Ascending aorta (tissue), 2 donors: ENCODE measurements at regions of chr3 and their contacts with region 1.

Region 1: GRCh38 chr3:113745273-113746068 is 578 bp downstream of the NAA50 start:
- DNase-seq: peak; percentile 59 to 88
- H3K4me3 ChIP-seq: peak overlapping the region; percentile 97 to 100
- H3K27ac ChIP-seq: peak overlapping the region; percentile 98 to 100
- H3K4me1 ChIP-seq: peaks cover 6 to 29% of the 10 kb centered on the region in 2 donors
- H3K27me3 ChIP-seq: no peaks in the 10 kb centered on the region
- CTCF ChIP-seq: peak; percentile 44 to 80 (median 65)

Region 2: DNA sequence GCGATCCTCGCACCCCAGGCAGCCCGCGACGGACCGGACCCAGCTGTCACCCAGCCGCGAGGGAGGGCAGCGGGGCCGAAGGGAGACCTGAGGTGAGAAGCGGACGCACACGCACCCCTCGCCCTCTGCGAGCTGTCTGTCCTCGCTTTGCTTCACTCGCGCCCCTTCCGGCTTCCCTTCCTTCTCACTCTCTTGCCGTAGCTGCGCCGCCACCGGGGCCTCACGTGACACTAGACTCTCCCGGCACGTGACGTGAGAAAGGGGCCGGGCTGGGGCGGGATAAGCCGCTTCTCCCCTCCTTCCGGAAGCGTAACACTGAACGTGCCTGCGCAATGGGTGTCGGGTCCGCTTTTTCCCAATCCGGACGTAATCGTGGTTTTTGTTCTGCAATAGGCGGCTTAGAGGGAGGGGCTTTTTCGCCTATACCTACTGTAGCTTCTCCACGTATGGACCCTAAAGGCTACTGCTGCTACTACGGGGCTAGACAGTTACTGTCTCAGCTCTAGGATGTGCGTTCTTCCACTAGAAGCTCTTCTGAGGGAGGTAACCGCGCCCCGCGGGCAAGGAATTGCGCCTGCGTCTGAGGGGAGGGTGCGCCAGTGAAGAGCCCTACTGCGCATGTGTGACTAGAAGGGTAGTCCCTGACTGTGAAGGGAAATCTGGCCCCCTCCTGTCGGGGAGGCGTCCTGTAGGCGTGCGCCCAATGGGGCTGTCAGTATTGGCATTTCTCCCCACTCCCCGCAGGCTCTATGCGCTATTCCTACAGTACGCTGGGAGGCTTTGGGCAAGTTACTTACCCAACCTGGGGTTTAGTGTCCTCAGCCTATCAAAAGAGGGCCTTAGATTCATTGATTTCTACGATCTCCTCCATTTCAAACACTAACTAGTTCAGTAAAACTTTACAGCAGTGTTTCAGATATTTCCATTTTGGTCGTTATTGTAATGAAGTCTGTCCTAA is 1183.5 kb before region 1 on chr3 and contains the starts of genes ATG3 and SLC35A5:
- intact Hi-C with region 1: loop called (anchors 2 kb)
- DNase-seq: peak; percentile 95 to 100
- H3K4me3 ChIP-seq: peak within 1 kb of the TSS; percentile 70 to 73
- H3K27ac ChIP-seq: peak within 1 kb of the TSS; percentile 95 to 98
- H3K4me1 ChIP-seq: peaks cover 8 to 17% of the 10 kb centered on the region in 2 donors
- H3K27me3 ChIP-seq: no peaks in the 10 kb centered on the region
- CTCF ChIP-seq: peak in 1 of 3 experiments; percentile 5
- total RNA-seq, gene ATG3: 73.3 TPM
- total RNA-seq, gene SLC35A5: 20.8 TPM

Region 3: DNA sequence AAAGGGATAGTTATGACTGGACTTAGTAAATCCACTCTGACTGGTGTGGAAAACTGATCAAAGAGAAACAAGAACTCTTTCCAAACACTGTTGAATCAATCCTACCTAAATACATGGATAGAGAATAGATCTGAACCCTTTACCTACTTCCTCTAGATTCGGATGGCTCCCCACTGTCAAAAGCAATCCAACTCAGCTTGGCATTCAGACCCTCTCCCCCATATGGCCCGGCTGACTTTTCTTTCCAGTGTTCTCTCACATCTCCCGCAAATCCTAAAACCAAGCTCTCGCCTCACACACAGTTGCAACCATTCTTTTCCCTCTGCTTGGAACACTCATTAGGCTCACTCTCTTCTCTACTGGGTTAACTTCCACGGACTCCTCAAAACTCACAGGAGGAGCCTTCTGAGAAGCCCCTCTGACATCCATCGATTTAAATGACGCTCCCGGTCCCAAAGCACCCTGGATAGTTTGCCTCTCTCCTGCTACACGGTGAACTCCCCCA is 231.2 kb before region 1 on chr3:
- intact Hi-C with region 1: loop called (anchors 1 kb)
- DNase-seq: no peak
- H3K4me3 ChIP-seq: peak overlapping the region; percentile 56 to 84
- H3K27ac ChIP-seq: peak overlapping the region; percentile 76 to 81
- H3K4me1 ChIP-seq: no peaks in the 10 kb centered on the region
- H3K27me3 ChIP-seq: no peaks in the 10 kb centered on the region
- CTCF ChIP-seq: no peak

Region 4: GRCh38 chr3:113783980-113784379 is 38.5 kb after region 1 on chr3:
- intact Hi-C with region 1: loop called (anchors 2 kb)
- DNase-seq: no peak
- H3K4me3 ChIP-seq: peak overlapping the region in 1 of 2 donors; percentile 3
- H3K27ac ChIP-seq: peak overlapping the region; percentile 55 to 69
- H3K4me1 ChIP-seq: peaks cover 0 to 6% of the 10 kb centered on the region in 2 donors
- H3K27me3 ChIP-seq: no peaks in the 10 kb centered on the region
- CTCF ChIP-seq: no peak

Region 5: GRCh38 chr3:114056130-114057010 is 310.9 kb after region 1 on chr3 and contains the starts of genes CCDC191 and QTRT2:
- intact Hi-C with region 1: loop called (anchors 2 kb)
- DNase-seq: peak; percentile 96 to 100
- H3K4me3 ChIP-seq: peak within 1 kb of the TSS; percentile 73 to 80
- H3K27ac ChIP-seq: peak within 1 kb of the TSS; percentile 61 to 68
- H3K4me1 ChIP-seq: peaks cover 8% of the 10 kb centered on the region in 2 donors
- H3K27me3 ChIP-seq: no peaks in the 10 kb centered on the region
- CTCF ChIP-seq: no peak
- total RNA-seq, gene CCDC191: 0.21 TPM
- total RNA-seq, gene QTRT2: 9.5 TPM